ENCODE measurements at regions of chr1 and their contacts with region 1.

Region 1: GRCh38 chr1:201559679-201560162 is 20.8 kb downstream of the NAV1 start:
- DNase-seq: peak; percentile 85 to 92
- ATAC-seq: peak; percentile 88 to 96
- H3K4me3 ChIP-seq: no peak overlapping the region
- H3K27ac ChIP-seq: peak overlapping the region; percentile 60 to 80
- H3K4me1 ChIP-seq: peaks cover 37% of the 10 kb centered on the region
- CTCF ChIP-seq: peak; percentile 95
- EP300 ChIP-seq: no peak
- POLR2A ChIP-seq: no peak
- RAD21 ChIP-seq: peak; percentile 99 to 100

Region 2: GRCh38 chr1:201505505-201505893 is 54.2 kb before region 1 on chr1:
- CTCF ChIA-PET with region 1: no interaction called
- POLR2A ChIA-PET with region 1: no interaction called
- DNase-seq: peak in 1 of 2 experiments; percentile 60
- ATAC-seq: peak; percentile 9 to 33; a peak in 3 of 6 replicates
- H3K4me3 ChIP-seq: peak overlapping the region; percentile 66
- H3K27ac ChIP-seq: peak overlapping the region; percentile 87 to 96
- H3K4me1 ChIP-seq: peaks cover 62% of the 10 kb centered on the region
- CTCF ChIP-seq: no peak
- EP300 ChIP-seq: no peak
- POLR2A ChIP-seq: no peak
- RAD21 ChIP-seq: no peak

Region 3: GRCh38 chr1:201530741-201531531 is 28.8 kb before region 1 on chr1:
- CTCF ChIA-PET with region 1: interaction called, 48 read pairs
- POLR2A ChIA-PET with region 1: no interaction called
- DNase-seq: peak; percentile 75 to 89
- ATAC-seq: peak; percentile 89 to 94
- H3K4me3 ChIP-seq: no peak overlapping the region
- H3K27ac ChIP-seq: peak overlapping the region in 1 of 2 experiments; percentile 52; a peak in 2 of 6 replicates
- H3K4me1 ChIP-seq: peaks cover 21% of the 10 kb centered on the region
- CTCF ChIP-seq: peak; percentile 90
- EP300 ChIP-seq: no peak
- POLR2A ChIP-seq: no peak
- RAD21 ChIP-seq: peak; percentile 93 to 96

Region 4: GRCh38 chr1:201570886-201571624 is 11.3 kb after region 1 on chr1:
- CTCF ChIA-PET with region 1: interaction called, 84 read pairs
- POLR2A ChIA-PET with region 1: interaction called, 3 read pairs
- DNase-seq: no peak
- ATAC-seq: no peak
- H3K4me3 ChIP-seq: no peak overlapping the region
- H3K27ac ChIP-seq: peak overlapping the region in 1 of 2 experiments; percentile 33; a peak in 1 of 6 replicates
- H3K4me1 ChIP-seq: no peaks in the 10 kb centered on the region
- CTCF ChIP-seq: no peak
- EP300 ChIP-seq: no peak
- POLR2A ChIP-seq: no peak
- RAD21 ChIP-seq: no peak

Region 5: GRCh38 chr1:201602413-201603265 is 42.9 kb after region 1 on chr1:
- CTCF ChIA-PET with region 1: interaction called, 83 read pairs
- POLR2A ChIA-PET with region 1: no interaction called
- DNase-seq: peak; percentile 64 to 80
- ATAC-seq: peak; percentile 80 to 89
- H3K4me3 ChIP-seq: no peak overlapping the region
- H3K27ac ChIP-seq: peak overlapping the region; percentile 89 to 90
- H3K4me1 ChIP-seq: peaks cover 85% of the 10 kb centered on the region
- CTCF ChIP-seq: no peak
- EP300 ChIP-seq: peak; percentile 53 to 76; a peak in 3 of 5 replicates
- POLR2A ChIP-seq: no peak
- RAD21 ChIP-seq: 0 out of 5 replicates have a peak, but pooled peaks have one; percentile 4 to 19

Region 6: DNA sequence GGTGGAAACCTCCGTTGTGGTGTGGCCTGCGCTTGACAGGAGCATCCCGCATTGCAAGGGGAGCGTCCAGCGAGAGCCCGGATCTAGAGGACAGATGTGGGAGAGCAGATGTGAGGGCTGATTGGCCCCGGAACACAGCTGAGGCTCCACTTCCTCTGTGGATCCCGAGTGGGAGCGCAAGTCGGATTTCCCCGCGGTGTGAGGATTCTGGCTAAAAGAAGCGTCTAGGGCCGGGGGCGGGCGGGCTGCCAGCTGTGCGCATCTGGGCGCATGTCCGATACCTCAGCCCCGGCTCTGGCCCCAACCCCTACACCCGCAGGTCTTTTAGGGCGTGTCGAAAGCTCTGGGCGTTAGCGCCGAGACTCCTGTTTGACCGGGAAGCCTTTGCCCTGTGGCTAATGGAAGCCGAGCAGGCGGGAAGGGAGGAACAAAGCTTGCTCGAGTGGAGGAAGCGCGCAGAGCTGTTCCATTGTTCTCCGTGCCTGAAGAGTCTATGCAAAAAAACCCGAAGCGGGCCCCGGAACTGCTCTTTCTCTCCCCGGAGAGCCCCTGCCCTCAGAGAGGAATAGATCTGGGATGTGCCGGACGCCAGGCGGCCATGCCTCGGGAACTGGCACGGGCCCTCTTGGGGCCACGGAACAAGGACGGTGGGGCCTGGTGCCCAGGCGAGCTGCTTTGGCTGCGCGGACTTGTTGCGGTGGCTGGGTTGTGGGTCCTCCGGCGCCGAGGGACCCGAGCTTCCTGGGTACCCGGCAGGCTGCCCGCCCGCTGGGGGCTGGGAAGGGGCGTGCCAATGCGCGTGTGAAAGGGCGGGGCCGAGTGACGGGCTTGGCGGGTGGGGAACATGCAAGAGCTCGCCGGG is 90.3 kb after region 1 on chr1:
- CTCF ChIA-PET with region 1: interaction called, 105 read pairs
- POLR2A ChIA-PET with region 1: interaction called, 3 read pairs
- DNase-seq: peak; percentile 42 to 44
- ATAC-seq: peak; percentile 22 to 54; a peak in 5 of 6 replicates
- H3K4me3 ChIP-seq: peak overlapping the region; percentile 60
- H3K27ac ChIP-seq: peak overlapping the region; percentile 69 to 88
- H3K4me1 ChIP-seq: peaks cover 29% of the 10 kb centered on the region
- CTCF ChIP-seq: no peak
- EP300 ChIP-seq: no peak
- POLR2A ChIP-seq: no peak
- RAD21 ChIP-seq: no peak

Region 7: DNA sequence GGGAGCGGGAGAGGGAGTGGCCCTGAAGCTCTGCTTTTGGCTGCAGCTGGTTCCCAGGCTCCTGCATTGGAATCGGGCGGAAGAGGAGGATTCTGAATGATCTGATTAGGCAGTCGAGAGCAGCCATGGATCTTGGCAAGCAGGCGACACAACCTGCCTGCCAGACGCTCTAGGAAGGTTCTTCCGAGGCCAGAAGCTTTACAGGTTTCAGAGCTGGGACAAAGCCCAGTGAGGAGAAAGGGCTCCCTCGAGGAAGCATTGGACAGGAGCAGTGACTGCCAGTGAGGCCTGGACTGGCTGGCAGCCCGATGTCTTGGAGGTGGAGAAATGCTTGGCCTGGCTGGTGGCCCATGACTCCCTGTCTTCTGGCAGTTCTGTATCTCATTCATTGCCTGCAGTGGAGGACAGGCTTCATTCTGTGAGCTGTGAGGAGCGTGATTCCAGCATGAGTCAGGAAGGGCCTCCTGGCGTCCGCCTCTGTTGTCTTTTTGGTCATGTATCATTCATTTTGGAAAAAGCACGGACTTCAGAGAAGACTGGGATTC is 136.6 kb after region 1 on chr1:
- CTCF ChIA-PET with region 1: interaction called, 437 read pairs
- POLR2A ChIA-PET with region 1: no interaction called
- DNase-seq: no peak
- ATAC-seq: peak; percentile 74 to 83
- H3K4me3 ChIP-seq: no peak overlapping the region
- H3K27ac ChIP-seq: peak overlapping the region; percentile 45 to 74; a peak in 5 of 6 replicates
- H3K4me1 ChIP-seq: peaks cover 18% of the 10 kb centered on the region
- CTCF ChIP-seq: no peak
- EP300 ChIP-seq: no peak
- POLR2A ChIP-seq: no peak
- RAD21 ChIP-seq: no peak